Esophagus squamous epithelium (tissue), 5 donors: ENCODE measurements at regions of chr3 and their contacts with region 1.

Region 1: GRCh38 chr3:66253790-66254620 is 33.2 kb downstream of the SLC25A26 start:
- DNase-seq: no peak
- H3K4me3 ChIP-seq: no peak overlapping the region
- H3K27ac ChIP-seq: no peak overlapping the region
- H3K4me1 ChIP-seq: no peaks in the 10 kb centered on the region
- H3K27me3 ChIP-seq: no peaks in the 10 kb centered on the region
- CTCF ChIP-seq: peak; percentile 67 to 81 (median 79)
- POLR2A ChIP-seq: no peak

Region 2: GRCh38 chr3:66107855-66108254 is 146.2 kb before region 1 on chr3:
- intact Hi-C with region 1: no loop called
- DNase-seq: no peak
- H3K4me3 ChIP-seq: no peak overlapping the region
- H3K27ac ChIP-seq: no peak overlapping the region
- H3K4me1 ChIP-seq: no peaks in the 10 kb centered on the region
- H3K27me3 ChIP-seq: no peaks in the 10 kb centered on the region
- CTCF ChIP-seq: no peak
- POLR2A ChIP-seq: no peak

Region 3: GRCh38 chr3:66822186-66823008 is 568.4 kb after region 1 on chr3:
- intact Hi-C with region 1: loop called (anchors 10 kb)
- DNase-seq: no peak
- H3K4me3 ChIP-seq: no peak overlapping the region
- H3K27ac ChIP-seq: no peak overlapping the region
- H3K4me1 ChIP-seq: no peaks in the 10 kb centered on the region
- H3K27me3 ChIP-seq: no peaks in the 10 kb centered on the region
- CTCF ChIP-seq: peak; percentile 66 to 80 (median 74)
- POLR2A ChIP-seq: no peak